Upper lobe of right lung (tissue), 1 donor: ENCODE measurements at regions of chr1 and their contacts with region 1.

Region 1: GRCh38 chr1:219189021-219189824 is 15.5 kb downstream of the LYPLAL1 start:
- DNase-seq: no peak
- ATAC-seq: no peak
- H3K4me3 ChIP-seq: no peak overlapping the region
- H3K27ac ChIP-seq: peak overlapping the region; percentile 2
- H3K4me1 ChIP-seq: peaks cover 22% of the 10 kb centered on the region
- H3K27me3 ChIP-seq: no peaks in the 10 kb centered on the region
- CTCF ChIP-seq: no peak

Region 2: GRCh38 chr1:218330043-218330623 is 859.1 kb before region 1 on chr1:
- intact Hi-C with region 1: loop called (anchors 10 kb)
- DNase-seq: no peak
- ATAC-seq: peak; percentile 64
- H3K4me3 ChIP-seq: no peak overlapping the region
- H3K27ac ChIP-seq: no peak overlapping the region
- H3K4me1 ChIP-seq: no peaks in the 10 kb centered on the region
- H3K27me3 ChIP-seq: no peaks in the 10 kb centered on the region
- CTCF ChIP-seq: peak; percentile 74

Region 3: DNA sequence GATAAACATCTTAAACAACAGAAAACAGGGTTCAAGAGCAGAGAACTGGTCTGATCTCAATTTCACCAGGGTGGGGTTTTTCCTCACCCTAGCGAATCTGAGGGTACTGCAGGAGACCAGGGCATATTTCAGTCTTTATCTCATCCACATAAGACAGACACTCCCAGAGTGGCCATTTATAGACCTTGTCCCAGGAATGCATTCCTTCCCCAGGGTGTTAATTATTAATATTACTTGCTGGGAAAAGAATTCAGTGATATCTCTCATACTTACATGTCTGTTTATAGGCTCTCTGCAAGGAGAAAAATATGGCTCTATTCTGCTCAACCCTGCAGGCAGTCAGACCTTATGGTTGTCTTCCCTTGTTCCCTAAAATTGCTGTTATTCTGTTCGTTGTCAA is 68.5 kb after region 1 on chr1:
- intact Hi-C with region 1: no loop called
- DNase-seq: no peak
- ATAC-seq: no peak
- H3K4me3 ChIP-seq: no peak overlapping the region
- H3K27ac ChIP-seq: no peak overlapping the region
- H3K4me1 ChIP-seq: no peaks in the 10 kb centered on the region
- H3K27me3 ChIP-seq: no peaks in the 10 kb centered on the region
- CTCF ChIP-seq: no peak

Region 4: DNA sequence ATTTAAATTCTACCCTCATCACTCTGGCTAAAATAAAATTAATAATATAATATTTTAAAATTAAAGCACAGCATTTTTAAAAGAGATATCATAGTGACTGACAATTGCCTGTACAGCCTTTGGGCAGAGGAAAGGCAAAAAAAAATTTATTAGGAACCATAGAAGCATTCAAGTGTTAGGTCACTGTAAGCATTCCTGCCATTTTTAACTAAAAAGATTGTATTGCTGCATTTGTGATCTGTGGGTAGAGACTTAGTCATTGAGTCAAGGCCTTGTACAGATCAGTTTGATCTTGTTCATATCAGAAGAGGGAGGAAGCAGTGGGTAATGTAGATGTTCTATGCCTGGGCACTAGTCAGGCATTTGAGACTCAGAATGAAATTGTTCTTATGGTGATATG is 94.3 kb after region 1 on chr1:
- intact Hi-C with region 1: no loop called
- DNase-seq: no peak
- ATAC-seq: no peak
- H3K4me3 ChIP-seq: no peak overlapping the region
- H3K27ac ChIP-seq: no peak overlapping the region
- H3K4me1 ChIP-seq: no peaks in the 10 kb centered on the region
- H3K27me3 ChIP-seq: no peaks in the 10 kb centered on the region
- CTCF ChIP-seq: no peak

Region 5: DNA sequence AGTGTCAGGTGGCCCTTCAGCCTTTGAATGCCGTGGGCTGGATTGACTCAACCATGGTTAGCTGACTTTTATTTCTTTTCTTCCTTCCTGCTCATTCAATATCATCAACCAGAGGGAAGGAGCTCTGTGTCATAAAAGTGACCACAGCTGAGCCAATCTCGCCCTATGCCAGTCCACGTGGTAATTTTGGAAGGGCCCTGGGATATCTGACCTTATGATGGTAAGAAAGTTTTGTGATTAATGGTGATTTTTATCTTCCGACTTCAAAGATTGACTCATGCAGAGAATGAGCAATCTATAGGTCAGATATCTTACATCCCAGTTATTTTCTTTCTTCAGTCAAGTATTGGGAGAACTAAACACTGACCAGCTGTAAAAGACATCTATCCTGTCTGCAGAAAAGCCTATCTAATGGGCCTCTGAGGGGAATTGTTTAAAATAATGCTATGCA is 253.4 kb after region 1 on chr1:
- intact Hi-C with region 1: no loop called
- DNase-seq: no peak
- ATAC-seq: no peak
- H3K4me3 ChIP-seq: no peak overlapping the region
- H3K27ac ChIP-seq: no peak overlapping the region
- H3K4me1 ChIP-seq: no peaks in the 10 kb centered on the region
- H3K27me3 ChIP-seq: no peaks in the 10 kb centered on the region
- CTCF ChIP-seq: no peak